H1 (cell line): ENCODE measurements at regions of chr1 and their contacts with region 1.

Region 1: GRCh38 chr1:22052115-22053016 is at the start of gene CDC42:
- DNase-seq: peak; percentile 83 to 99
- H3K4me3 ChIP-seq: peak within 1 kb of the TSS; percentile 61 to 87 (median 75)
- H3K27ac ChIP-seq: peak within 1 kb of the TSS; percentile 95
- H3K4me1 ChIP-seq: peaks cover 0 to 3% (median 2%) of the 10 kb centered on the region in 4 experiments; a peak in 4 of 7 replicates
- H3K27me3 ChIP-seq: no peaks in the 10 kb centered on the region
- CTCF ChIP-seq: no peak
- EP300 ChIP-seq: no peak
- POLR2A ChIP-seq: peak; percentile 82 to 88
- RAD21 ChIP-seq: no peak; a peak in 1 of 4 replicates
- total RNA-seq, gene CDC42: 179 and 182 TPM in 2 replicates

Region 2: DNA sequence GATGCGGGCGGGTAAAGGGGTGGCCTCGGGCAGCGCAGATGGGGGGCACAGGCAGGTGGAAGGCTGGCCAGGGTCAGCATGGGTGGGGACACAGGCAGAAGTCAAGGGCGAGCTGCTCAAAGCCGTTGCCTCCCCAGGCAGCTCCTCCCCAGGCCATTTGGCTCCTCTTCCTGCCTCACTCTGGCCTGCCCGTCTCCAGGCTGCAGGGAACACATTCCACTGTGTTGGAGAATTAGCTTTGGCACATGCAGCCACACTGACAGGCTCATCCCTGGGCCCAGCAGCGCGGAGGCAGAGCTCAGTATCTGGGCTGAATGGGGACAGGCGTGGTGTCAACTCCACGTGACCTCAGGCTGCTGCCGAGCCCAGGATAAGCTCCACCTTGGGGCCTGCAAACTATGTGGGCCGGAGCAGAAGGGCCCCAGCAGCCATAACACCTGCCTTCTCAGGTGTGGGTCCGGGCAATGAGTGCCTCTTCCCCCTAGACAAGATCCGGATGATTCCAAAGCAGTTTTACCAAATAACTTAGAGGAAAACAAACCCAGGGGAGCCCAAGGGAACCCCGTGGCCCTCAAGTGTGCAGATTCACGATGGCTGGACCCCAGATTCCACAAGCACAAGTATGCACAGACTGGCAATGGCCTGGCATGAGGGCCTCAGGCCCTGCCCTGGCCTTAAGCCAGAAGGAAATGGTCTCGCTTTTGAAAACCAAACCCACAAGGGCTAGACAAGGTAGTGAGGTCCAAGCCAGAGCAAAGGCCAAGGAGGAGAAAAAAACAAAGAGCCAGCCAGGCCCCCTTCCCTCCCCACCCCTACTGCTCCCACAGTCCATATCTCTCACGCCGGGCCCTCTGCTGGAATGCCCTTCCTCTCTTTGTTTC is 155.5 kb before region 1 on chr1:
- CTCF ChIA-PET with region 1: no interaction called
- POLR2A ChIA-PET with region 1: no interaction called
- DNase-seq: no peak
- H3K4me3 ChIP-seq: no peak overlapping the region
- H3K27ac ChIP-seq: no peak overlapping the region
- H3K4me1 ChIP-seq: peaks cover 0 to 11% (median 4%) of the 10 kb centered on the region in 4 experiments; a peak in 2 of 7 replicates
- H3K27me3 ChIP-seq: no peaks in the 10 kb centered on the region
- CTCF ChIP-seq: no peak
- EP300 ChIP-seq: no peak
- POLR2A ChIP-seq: no peak
- RAD21 ChIP-seq: no peak

Region 3: GRCh38 chr1:22025368-22026155 is 26.8 kb before region 1 on chr1:
- CTCF ChIA-PET with region 1: interaction called, 5 read pairs
- POLR2A ChIA-PET with region 1: interaction called, 14 read pairs
- DNase-seq: peak in 1 of 2 experiments; percentile 87
- H3K4me3 ChIP-seq: peak overlapping the region; percentile 93 to 96 (median 94)
- H3K27ac ChIP-seq: peak overlapping the region; percentile 90
- H3K4me1 ChIP-seq: peaks cover 0 to 12% (median 8%) of the 10 kb centered on the region in 4 experiments
- H3K27me3 ChIP-seq: no peaks in the 10 kb centered on the region
- CTCF ChIP-seq: no peak
- EP300 ChIP-seq: no peak
- POLR2A ChIP-seq: peak in 1 of 2 experiments; percentile 90; a peak in 2 of 3 replicates
- RAD21 ChIP-seq: no peak

Region 4: GRCh38 chr1:22064751-22065402 is 12.5 kb after region 1 on chr1:
- CTCF ChIA-PET with region 1: no interaction called
- POLR2A ChIA-PET with region 1: interaction called, 27 read pairs
- DNase-seq: no peak
- H3K4me3 ChIP-seq: no peak overlapping the region
- H3K27ac ChIP-seq: no peak overlapping the region
- H3K4me1 ChIP-seq: peaks cover 0 to 12% (median 1%) of the 10 kb centered on the region in 4 experiments; a peak in 6 of 7 replicates
- H3K27me3 ChIP-seq: no peaks in the 10 kb centered on the region
- CTCF ChIP-seq: no peak
- EP300 ChIP-seq: no peak
- POLR2A ChIP-seq: no peak
- RAD21 ChIP-seq: no peak